A549 (cell line): ENCODE measurements at regions of chr5 and their contacts with region 1.

Region 1: DNA sequence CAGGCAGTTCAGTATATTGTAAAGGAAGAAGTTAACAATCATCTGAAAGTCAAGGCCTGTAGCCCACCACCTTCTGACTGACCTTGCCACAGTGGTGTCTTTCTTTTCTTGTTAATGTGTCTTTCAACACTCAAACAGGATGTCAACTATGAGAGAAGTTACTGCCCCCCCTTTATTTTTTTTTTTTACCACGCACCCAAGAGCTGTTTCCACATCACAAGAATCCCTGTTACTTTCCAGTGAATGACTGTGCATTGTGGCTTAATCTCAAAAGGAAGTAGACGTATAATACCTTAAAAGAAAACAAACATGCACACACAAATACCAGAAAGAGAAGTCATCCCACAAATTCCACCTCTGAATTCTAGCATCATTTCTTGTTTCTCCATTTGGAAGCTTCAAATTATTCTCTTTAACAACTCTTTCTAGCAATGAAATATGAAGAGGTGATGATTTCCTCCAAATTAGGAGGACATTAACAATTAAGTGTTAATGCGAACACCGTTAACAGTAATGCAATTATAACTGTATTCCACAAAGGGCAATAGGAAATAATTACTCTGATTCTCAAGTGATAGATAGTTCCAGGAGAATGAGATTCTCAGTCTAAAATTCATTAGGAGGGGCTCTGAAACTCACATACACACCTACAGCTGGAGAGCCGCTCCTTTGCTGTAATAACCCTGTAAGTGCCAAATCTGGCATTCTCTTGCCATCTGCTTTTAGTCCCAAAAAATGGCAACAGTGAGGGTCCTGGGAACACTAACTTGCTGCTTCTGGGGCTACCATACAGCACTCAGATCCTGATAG is 201.0 kb downstream of the EFNA5 start:
- DNase-seq: peak; percentile 53 to 95
- ATAC-seq: peak; percentile 68
- H3K4me3 ChIP-seq: 0 out of 3 replicates have a peak overlapping the region, but pooled peaks have one; percentile 2
- H3K27ac ChIP-seq: peak overlapping the region; percentile 94
- H3K4me1 ChIP-seq: peaks cover 94% of the 10 kb centered on the region
- CTCF ChIP-seq: no peak
- EP300 ChIP-seq: peak; percentile 93; a peak in 4 of 5 replicates
- POLR2A ChIP-seq: no peak
- RAD21 ChIP-seq: peak; percentile 25 to 64; a peak in 4 of 5 replicates

Region 2: GRCh38 chr5:107381189-107381856 is 88.4 kb before region 1 on chr5:
- CTCF ChIA-PET with region 1: interaction called, 3 read pairs
- POLR2A ChIA-PET with region 1: interaction called, 12 read pairs
- DNase-seq: peak; percentile 80 to 95
- ATAC-seq: peak; percentile 91 to 96
- H3K4me3 ChIP-seq: peak overlapping the region; percentile 9; the same call in 1 of the 3 replicates
- H3K27ac ChIP-seq: peak overlapping the region; percentile 88 to 92
- H3K4me1 ChIP-seq: peaks cover 91% of the 10 kb centered on the region
- CTCF ChIP-seq: no peak
- EP300 ChIP-seq: peak; percentile 75 to 88; a peak in 3 of 5 replicates
- POLR2A ChIP-seq: no peak
- RAD21 ChIP-seq: peak; percentile 39 to 70

Region 3: DNA sequence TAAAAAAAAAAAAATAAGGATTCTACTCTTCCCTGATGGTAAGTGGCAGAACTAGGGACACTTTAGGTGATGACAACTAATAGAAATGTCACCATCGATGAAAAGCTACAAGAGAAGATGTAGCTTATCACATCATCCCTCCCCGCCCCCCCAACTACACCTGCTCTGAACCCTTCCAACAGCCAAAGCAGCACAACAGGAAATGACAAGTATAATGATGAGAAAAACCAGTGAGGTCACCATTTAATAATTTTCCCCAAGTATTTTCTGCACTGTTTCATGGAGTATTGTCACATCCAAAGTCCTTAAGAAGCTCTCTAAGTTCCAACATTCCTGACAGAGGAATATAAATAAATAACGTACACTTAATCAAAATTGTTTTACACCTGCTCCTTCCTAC is 20.3 kb before region 1 on chr5:
- CTCF ChIA-PET with region 1: no interaction called
- POLR2A ChIA-PET with region 1: no interaction called
- DNase-seq: no peak
- ATAC-seq: no peak
- H3K4me3 ChIP-seq: no peak overlapping the region
- H3K27ac ChIP-seq: no peak overlapping the region
- H3K4me1 ChIP-seq: peaks cover 32% of the 10 kb centered on the region
- CTCF ChIP-seq: no peak
- EP300 ChIP-seq: no peak
- POLR2A ChIP-seq: no peak
- RAD21 ChIP-seq: no peak

Region 4: DNA sequence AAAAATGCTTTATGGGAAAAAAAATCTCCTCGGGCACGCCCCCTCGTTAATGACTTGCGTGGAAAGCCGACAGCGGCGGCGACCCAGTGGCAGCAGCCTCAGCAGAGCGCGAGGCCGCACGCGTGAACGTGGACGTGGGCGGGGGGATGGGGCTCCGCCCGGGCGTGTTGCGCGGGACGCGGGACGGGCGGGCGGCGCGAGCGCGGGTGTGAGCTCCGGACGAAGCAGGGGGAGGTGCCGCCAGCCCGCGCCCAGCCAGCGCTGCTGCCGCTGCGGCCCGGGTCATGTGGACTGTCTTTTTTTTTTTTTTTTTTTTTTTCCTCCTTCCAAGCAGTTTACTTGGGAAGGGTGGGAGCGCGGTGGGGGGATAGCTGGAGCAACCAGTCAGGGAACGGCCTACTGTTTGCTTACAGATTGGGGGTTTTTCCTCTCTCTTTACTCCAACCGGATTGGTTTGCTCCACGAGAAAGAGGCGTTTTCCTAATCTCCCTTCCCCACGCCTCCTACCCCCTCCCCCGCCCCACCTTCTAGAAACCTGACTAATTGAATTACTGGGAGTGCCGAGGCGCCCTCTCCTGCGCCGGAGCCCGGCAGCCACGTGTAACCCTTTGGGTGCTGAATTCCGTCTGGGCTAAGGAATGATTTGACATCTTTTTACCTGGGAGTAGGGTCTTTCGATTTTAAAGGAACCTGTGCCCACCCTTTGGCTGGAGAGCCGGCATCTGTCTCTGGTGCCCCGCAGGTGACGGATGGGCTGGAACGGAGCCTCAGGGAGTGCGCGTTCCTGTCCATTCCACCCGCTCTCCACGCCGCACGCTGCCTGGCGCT is 202.7 kb after region 1 on chr5:
- CTCF ChIA-PET with region 1: interaction called, 6 read pairs
- POLR2A ChIA-PET with region 1: interaction called, 13 read pairs
- DNase-seq: peak; percentile 93 to 99
- ATAC-seq: peak; percentile 55 to 83
- H3K4me3 ChIP-seq: peak overlapping the region; percentile 69
- H3K27ac ChIP-seq: peak overlapping the region; percentile 90 to 99
- H3K4me1 ChIP-seq: peaks cover 18% of the 10 kb centered on the region
- CTCF ChIP-seq: no peak
- EP300 ChIP-seq: no peak
- POLR2A ChIP-seq: peak; percentile 58
- RAD21 ChIP-seq: no peak; a peak in 2 of 5 replicates